Heart right ventricle (tissue), 16 donors: ENCODE measurements at regions of chr17 and their contacts with region 1.

Region 1: DNA sequence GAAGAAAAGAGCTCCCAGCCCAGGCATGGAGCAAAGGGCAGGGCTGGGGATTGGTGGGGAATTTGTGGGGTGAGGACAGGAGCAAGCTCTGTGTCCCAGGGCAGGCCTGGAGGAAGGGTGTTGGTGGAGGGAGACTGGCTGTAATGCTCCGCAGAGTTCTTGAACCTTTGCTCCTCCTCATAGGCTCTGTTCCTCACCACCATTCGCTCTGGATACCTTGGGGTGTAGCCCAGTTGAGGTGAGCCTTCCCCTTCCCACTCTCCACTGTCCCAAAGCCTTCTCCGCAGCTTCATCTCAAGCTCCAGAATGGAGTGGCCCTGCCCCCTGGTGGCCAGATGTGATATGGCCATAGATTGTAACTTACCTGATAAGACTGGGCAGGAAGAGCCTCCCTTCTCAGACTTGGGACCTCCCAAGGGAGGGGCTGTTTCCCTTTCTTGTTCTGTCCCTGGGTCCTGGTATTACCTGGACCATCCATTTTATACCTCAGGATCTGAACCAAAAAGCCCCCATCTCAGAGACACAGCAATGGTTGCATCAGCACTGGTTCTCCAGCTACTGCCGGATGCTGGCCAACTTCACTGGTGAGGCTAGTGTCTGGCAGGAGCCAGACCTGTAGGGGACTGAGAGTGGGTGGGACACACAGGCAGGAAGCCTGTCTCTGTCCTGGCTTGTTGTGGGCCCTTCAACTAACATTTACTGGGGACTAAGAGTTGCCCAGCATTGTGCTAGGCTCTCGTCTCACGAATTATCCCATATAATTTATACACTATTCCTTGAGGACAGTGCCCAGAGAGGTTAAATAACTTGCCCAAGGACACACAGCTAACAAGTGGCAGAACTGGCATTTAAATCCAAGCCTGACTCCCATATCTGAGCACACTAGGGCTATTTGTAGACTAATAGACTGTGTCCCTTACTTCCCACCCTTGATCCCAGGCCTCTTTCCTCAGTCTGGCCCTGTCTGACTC is 19.1 kb upstream of the STAC2 start:
- DNase-seq: peak; percentile 79 to 86
- ATAC-seq: peak; percentile 86 to 95 (median 89)
- H3K4me3 ChIP-seq: no peak overlapping the region
- H3K27ac ChIP-seq: no peak overlapping the region
- H3K4me1 ChIP-seq: peaks cover 0 to 17% (median 5%) of the 10 kb centered on the region in 9 donors
- H3K27me3 ChIP-seq: peaks cover 0 to 5% (median under 1%) of the 10 kb centered on the region in 7 donors
- CTCF ChIP-seq: peak; percentile 91 to 97 (median 95)

Region 2: GRCh38 chr17:38967290-38967738 is 277.6 kb before region 1 on chr17 and contains the start of gene FBXO47:
- intact Hi-C with region 1: loop called in 1 of 10 experiments (anchors 10 kb)
- DNase-seq: peak; percentile 92 to 97
- ATAC-seq: peak; percentile 97 to 100 (median 99)
- H3K4me3 ChIP-seq: peak within 1 kb of the TSS in 9 of 10 donors; percentile 4 to 52 (median 35)
- H3K27ac ChIP-seq: peak within 1 kb of the TSS; percentile 12 to 87 (median 72)
- H3K4me1 ChIP-seq: peaks cover 0 to 11% (median 0%) of the 10 kb centered on the region in 9 donors
- H3K27me3 ChIP-seq: no peaks in the 10 kb centered on the region
- CTCF ChIP-seq: peak in 6 of 9 donors; percentile 20 to 59 (median 36)
- total RNA-seq, gene FBXO47: not detected

Region 3: DNA sequence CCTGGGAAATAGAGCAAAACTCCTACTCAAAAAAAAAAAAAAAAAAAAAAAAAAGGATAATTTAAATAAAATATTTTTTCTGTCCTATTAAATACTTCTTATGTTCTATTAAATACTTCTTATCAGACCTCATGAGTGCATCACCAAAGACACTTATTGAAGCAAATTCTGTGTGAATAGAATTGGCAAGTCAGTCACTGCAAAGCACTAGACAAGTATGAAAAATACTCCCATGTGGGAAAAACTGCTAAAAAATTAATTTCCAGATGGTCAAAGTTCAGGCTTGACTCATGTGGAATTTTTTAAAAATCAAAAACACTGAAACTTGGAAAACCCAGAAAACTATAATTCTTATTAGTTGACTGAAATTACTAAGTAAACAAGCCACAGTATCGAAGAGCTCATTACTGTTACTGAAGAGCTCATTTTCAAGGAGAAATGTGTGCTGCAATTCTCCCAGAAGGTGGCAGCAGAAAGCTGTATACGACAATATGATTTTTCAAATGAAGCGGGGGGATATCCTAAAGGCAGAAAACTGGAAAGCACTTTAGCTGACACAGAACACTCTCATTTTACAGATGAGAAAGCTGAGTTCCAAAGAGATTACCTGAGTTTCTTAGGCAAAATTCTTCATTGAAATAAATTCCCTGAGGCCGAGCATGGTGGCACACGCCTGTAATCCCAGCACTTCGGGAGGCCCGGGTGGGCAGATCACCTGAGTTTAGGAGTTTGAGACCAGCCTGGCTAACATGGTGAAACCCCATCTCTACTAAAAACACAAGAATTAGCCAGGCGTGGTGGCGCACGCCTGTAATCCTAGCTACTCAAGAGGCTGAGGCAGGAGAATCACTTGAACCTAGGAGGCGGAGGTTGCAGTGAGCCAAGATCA is 261.8 kb before region 1 on chr17:
- intact Hi-C with region 1: loop called in 4 of 10 experiments (anchors 5 to 10 kb)
- DNase-seq: peak in 1 of 2 donors; percentile 70
- ATAC-seq: peak in 7 of 8 donors; percentile 52 to 79 (median 74)
- H3K4me3 ChIP-seq: no peak overlapping the region
- H3K27ac ChIP-seq: peak overlapping the region in 5 of 10 donors; percentile 8 to 71 (median 55)
- H3K4me1 ChIP-seq: peaks cover 0 to 9% (median 3%) of the 10 kb centered on the region in 9 donors
- H3K27me3 ChIP-seq: no peaks in the 10 kb centered on the region
- CTCF ChIP-seq: peak; percentile 66 to 92 (median 84)

Region 4: GRCh38 chr17:39164675-39165143 is 80.2 kb before region 1 on chr17:
- intact Hi-C with region 1: loop called in 2 of 10 experiments (anchors 10 kb)
- DNase-seq: peak; percentile 90 to 95
- ATAC-seq: peak; percentile 86 to 94 (median 92)
- H3K4me3 ChIP-seq: peak overlapping the region; percentile 32 to 63 (median 58)
- H3K27ac ChIP-seq: peak overlapping the region in 7 of 10 donors; percentile 11 to 63 (median 36)
- H3K4me1 ChIP-seq: peaks cover 0 to 46% (median 38%) of the 10 kb centered on the region in 9 donors
- H3K27me3 ChIP-seq: peaks cover 0 to 8% (median 0%) of the 10 kb centered on the region in 7 donors
- CTCF ChIP-seq: peak; percentile 66 to 93 (median 79)

Region 5: GRCh38 chr17:39174907-39175694 is 69.8 kb before region 1 on chr17:
- intact Hi-C with region 1: no loop called
- DNase-seq: peak; percentile 77 to 83
- ATAC-seq: peak; percentile 74 to 92 (median 84)
- H3K4me3 ChIP-seq: peak overlapping the region in 5 of 10 donors; percentile 5 to 34 (median 15)
- H3K27ac ChIP-seq: no peak overlapping the region
- H3K4me1 ChIP-seq: peaks cover 0 to 13% (median 6%) of the 10 kb centered on the region in 9 donors
- H3K27me3 ChIP-seq: no peaks in the 10 kb centered on the region
- CTCF ChIP-seq: peak; percentile 84 to 93 (median 91)

Region 6: GRCh38 chr17:39209317-39210092 is 35.4 kb before region 1 on chr17:
- intact Hi-C with region 1: loop called in 8 of 10 experiments (anchors 1 to 5 kb)
- DNase-seq: peak; percentile 68 to 74
- ATAC-seq: peak; percentile 71 to 92 (median 78)
- H3K4me3 ChIP-seq: peak overlapping the region; percentile 14 to 57 (median 50)
- H3K27ac ChIP-seq: peak overlapping the region in 6 of 10 donors; percentile 13 to 50 (median 32)
- H3K4me1 ChIP-seq: peaks cover 9 to 25% (median 18%) of the 10 kb centered on the region in 9 donors
- H3K27me3 ChIP-seq: peaks cover 0 to 17% (median 2%) of the 10 kb centered on the region in 7 donors
- CTCF ChIP-seq: no peak

Region 7: DNA sequence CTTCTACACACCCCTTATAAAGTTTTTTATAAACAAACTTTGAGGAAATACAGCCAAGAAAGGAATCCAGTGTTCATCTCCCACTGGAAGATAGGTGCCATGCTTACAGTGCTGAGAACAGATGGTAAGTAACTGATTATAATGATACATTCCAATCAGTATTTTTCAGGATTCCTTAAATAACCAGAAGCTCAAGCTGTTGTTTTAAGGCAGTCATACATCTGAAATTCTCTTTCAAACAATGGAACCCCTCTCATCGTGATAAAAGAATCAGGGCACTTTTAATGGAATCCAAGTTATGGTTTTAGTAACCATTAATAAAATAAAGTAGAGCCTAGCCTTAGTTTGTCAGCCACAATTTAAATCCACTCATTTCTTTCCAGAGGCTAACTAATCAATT is 36.9 kb after region 1 on chr17:
- intact Hi-C with region 1: no loop called
- DNase-seq: no peak
- ATAC-seq: no peak
- H3K4me3 ChIP-seq: no peak overlapping the region
- H3K27ac ChIP-seq: peak overlapping the region in 8 of 10 donors; percentile 34 to 82 (median 72)
- H3K4me1 ChIP-seq: peaks cover 0 to 30% (median 7%) of the 10 kb centered on the region in 9 donors
- H3K27me3 ChIP-seq: no peaks in the 10 kb centered on the region
- CTCF ChIP-seq: no peak